ENCODE measurements at regions of chr22 and their contacts with region 1.

Region 1: GRCh38 chr22:45742866-45743450 is 71.3 kb downstream of the ATXN10 start:
- DNase-seq: peak in 1 of 2 donors; percentile 61
- ATAC-seq: no peak
- H3K4me3 ChIP-seq: no peak overlapping the region
- H3K27ac ChIP-seq: peak overlapping the region; percentile 62 to 98
- H3K4me1 ChIP-seq: peaks cover 8 to 16% of the 10 kb centered on the region in 2 donors
- H3K27me3 ChIP-seq: no peaks in the 10 kb centered on the region

Region 2: DNA sequence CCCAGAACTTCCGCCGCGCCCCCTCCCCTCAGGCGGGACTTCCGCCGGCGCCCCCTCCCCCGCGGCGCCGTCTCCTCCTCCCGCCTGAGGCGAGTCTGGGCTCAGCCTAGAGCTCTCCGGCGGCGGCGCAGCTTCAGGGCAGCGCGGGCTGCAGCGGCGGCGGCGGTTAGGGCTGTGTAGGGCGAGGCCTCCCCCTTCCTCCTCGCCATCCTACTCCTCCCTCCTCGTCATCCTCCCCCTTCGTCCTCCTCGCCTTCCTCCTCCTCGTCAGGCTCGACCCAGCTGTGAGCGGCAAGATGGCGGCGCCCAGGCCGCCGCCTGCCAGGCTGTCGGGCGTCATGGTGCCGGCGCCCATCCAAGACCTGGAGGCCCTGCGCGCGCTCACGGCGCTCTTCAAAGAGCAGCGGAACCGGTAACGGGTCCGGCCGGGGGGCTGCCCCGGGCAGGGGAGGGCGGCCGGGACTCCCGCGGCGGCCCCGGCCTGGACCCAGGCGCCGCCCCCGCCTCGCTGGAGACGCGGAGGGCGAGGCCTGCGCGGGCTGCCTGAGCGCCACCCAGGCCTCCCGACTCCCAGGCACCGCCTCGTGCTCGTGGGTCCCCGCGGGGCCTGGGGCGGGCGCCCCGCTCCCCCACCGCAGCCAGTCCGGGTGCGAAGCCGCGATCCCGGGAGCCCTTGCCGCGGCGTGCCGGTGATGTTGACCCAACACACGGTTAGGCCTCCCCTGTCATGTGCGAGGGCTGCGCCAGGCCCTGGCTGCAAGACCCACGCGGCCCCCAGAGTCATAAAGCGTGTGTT is 71.0 kb before region 1 on chr22 and contains the start of gene ATXN10:
- intact Hi-C with region 1: loop called in 1 of 2 experiments (anchors 5 kb)
- DNase-seq: peak; percentile 78 to 87
- ATAC-seq: peak; percentile 87
- H3K4me3 ChIP-seq: peak within 1 kb of the TSS; percentile 62 to 75
- H3K27ac ChIP-seq: peak within 1 kb of the TSS; percentile 9 to 47
- H3K4me1 ChIP-seq: peaks cover 3 to 4% of the 10 kb centered on the region in 2 donors
- H3K27me3 ChIP-seq: no peaks in the 10 kb centered on the region
- total RNA-seq, gene ATXN10: 112 to 126 TPM